ENCODE measurements at regions of chr5 and their contacts with region 1.

Region 1: GRCh38 chr5:10756549-10756948 is 4.5 kb downstream of the DAP start:
- DNase-seq: no peak
- H3K4me3 ChIP-seq: no peak overlapping the region
- H3K27ac ChIP-seq: no peak overlapping the region
- H3K4me1 ChIP-seq: no peaks in the 10 kb centered on the region
- H3K27me3 ChIP-seq: no peaks in the 10 kb centered on the region
- CTCF ChIP-seq: no peak
- POLR2A ChIP-seq: no peak

Region 2: DNA sequence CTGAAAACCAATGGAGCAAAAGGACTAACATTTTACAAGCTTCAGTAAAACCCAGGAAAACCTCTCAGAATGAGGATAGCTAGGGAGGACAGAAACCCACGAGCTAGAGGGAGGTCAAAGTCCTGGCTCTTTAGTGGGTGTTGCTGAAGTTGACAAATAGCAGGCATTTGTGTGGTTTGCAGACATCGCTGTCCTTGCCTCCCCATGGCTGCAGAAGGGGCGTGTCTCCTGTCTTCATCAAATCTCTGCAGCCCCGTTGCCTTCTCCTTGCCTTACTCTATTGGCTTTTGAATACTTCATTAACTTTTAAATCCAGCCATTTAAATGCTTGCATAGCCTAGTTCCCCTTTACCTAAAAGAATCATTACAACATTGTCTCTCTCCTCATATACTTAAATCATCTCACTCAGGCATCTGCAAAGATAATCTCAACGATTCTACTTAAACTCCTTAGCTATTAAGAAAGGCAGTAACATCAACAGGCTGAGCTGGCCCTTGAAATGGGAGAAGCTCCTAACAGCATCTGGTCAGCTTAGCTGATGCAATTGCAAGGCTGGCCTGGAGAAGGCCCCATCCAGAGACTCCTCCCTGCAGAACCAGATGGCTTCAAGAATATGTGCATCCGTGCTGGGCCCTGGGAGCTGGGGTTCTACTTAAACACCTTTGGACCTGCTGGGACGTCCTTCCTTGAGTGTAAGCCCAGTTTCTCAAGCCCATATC is 973.5 kb before region 1 on chr5:
- intact Hi-C with region 1: loop called (anchors 5 kb)
- DNase-seq: no peak
- H3K4me3 ChIP-seq: no peak overlapping the region
- H3K27ac ChIP-seq: no peak overlapping the region
- H3K4me1 ChIP-seq: no peaks in the 10 kb centered on the region
- H3K27me3 ChIP-seq: no peaks in the 10 kb centered on the region
- CTCF ChIP-seq: no peak
- POLR2A ChIP-seq: no peak